CD14-positive monocyte (primary cell): ENCODE measurements at regions of chr16 and their contacts with region 1.

Region 1: DNA sequence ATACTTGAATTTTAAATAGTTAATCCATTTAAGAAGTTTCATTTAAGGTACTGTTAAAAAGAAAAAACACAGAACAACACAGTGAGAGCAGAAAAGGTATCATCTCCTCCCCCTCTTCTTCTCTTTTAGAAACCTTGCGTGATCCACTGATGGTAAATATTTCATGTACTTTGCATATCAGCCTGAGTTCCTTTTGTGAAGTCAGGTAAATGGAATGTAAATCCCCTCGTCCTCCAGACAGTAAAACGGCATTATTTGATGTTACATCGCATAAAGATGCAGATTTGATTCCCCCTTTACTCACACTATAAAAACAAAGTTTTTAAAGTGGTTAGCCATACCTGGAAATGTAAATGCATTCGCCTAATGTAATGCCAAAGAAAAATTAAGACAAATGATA is 234.4 kb downstream of the WWOX start:
- DNase-seq: no peak
- H3K4me3 ChIP-seq: no peak overlapping the region
- H3K4me3 Mint-ChIP-seq: no peak overlapping the region
- H3K27ac ChIP-seq: no peak overlapping the region
- H3K27ac Mint-ChIP-seq: no peak overlapping the region
- H3K4me1 ChIP-seq: no peaks in the 10 kb centered on the region
- H3K4me1 Mint-ChIP-seq: no peaks in the 10 kb centered on the region
- H3K27me3 ChIP-seq: no peaks in the 10 kb centered on the region
- H3K27me3 Mint-ChIP-seq: no peaks in the 10 kb centered on the region
- CTCF ChIP-seq: no peak

Region 2: GRCh38 chr16:78353610-78354275 is 19.9 kb after region 1 on chr16:
- intact Hi-C with region 1: loop called (anchors 1 kb)
- DNase-seq: no peak
- H3K4me3 ChIP-seq: no peak overlapping the region
- H3K4me3 Mint-ChIP-seq: no peak overlapping the region
- H3K27ac ChIP-seq: no peak overlapping the region
- H3K27ac Mint-ChIP-seq: no peak overlapping the region
- H3K4me1 ChIP-seq: no peaks in the 10 kb centered on the region
- H3K4me1 Mint-ChIP-seq: no peaks in the 10 kb centered on the region
- H3K27me3 ChIP-seq: no peaks in the 10 kb centered on the region
- H3K27me3 Mint-ChIP-seq: no peaks in the 10 kb centered on the region
- CTCF ChIP-seq: no peak

Region 3: DNA sequence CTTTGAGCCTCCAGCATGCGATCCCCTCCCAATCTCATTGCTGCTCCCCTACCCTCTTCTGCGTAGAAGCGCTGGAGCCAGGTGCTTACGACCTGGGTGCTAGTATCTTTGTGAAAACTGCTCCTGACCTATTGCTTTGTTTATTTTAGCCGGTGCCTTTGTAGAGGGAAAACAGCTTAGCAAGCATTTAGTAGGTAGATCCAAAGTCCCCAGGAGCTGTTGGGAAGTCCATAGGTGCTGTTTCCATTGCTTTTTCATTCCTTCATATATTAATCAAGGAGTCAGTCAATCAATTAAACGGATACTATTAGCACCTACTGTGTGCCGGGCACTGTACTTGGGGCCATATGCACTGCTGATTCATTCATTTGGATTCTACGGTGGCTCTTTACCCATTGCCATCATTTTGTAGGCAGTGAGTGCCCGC is 263.2 kb after region 1 on chr16:
- intact Hi-C with region 1: no loop called
- DNase-seq: no peak
- H3K4me3 ChIP-seq: no peak overlapping the region
- H3K4me3 Mint-ChIP-seq: no peak overlapping the region
- H3K27ac ChIP-seq: no peak overlapping the region
- H3K27ac Mint-ChIP-seq: no peak overlapping the region
- H3K4me1 ChIP-seq: no peaks in the 10 kb centered on the region
- H3K4me1 Mint-ChIP-seq: no peaks in the 10 kb centered on the region
- H3K27me3 ChIP-seq: no peaks in the 10 kb centered on the region
- H3K27me3 Mint-ChIP-seq: peaks cover 0 to 1% (median 0%) of the 10 kb centered on the region in 3 donors
- CTCF ChIP-seq: no peak